ENCODE measurements at regions of chr13 and their contacts with region 1.

Region 1: DNA sequence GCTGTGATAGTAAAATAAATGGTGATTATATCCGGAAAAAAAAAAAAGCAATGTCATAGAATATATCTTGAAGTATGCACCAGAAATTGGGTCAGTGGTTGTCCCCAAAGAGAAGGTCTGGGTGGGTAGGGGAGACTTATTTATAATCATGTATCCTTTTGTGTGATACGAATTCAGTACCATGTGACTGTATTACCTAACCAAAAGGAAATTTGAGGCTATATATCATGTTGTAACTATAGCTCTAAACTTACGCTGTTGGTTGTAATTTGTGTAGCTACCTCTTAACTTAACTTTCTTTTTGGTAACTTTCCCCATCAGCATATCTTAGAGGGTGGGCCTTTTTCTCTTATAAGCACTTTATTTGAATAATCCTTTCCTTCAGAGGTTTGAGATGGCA is 25.2 kb upstream of the KCTD4 start:
- DNase-seq: no peak
- H3K4me3 Mint-ChIP-seq: no peak overlapping the region
- H3K27ac Mint-ChIP-seq: no peak overlapping the region
- H3K4me1 Mint-ChIP-seq: peaks cover 11% of the 10 kb centered on the region
- H3K27me3 Mint-ChIP-seq: no peaks in the 10 kb centered on the region
- CTCF ChIP-seq: no peak

Region 2: GRCh38 chr13:44620057-44620456 is 606.0 kb before region 1 on chr13:
- CTCF ChIA-PET with region 1: no interaction called
- intact Hi-C with region 1: no loop called
- DNase-seq: no peak
- H3K4me3 Mint-ChIP-seq: no peak overlapping the region
- H3K27ac Mint-ChIP-seq: no peak overlapping the region
- H3K4me1 Mint-ChIP-seq: no peaks in the 10 kb centered on the region
- H3K27me3 Mint-ChIP-seq: no peaks in the 10 kb centered on the region
- CTCF ChIP-seq: no peak

Region 3: DNA sequence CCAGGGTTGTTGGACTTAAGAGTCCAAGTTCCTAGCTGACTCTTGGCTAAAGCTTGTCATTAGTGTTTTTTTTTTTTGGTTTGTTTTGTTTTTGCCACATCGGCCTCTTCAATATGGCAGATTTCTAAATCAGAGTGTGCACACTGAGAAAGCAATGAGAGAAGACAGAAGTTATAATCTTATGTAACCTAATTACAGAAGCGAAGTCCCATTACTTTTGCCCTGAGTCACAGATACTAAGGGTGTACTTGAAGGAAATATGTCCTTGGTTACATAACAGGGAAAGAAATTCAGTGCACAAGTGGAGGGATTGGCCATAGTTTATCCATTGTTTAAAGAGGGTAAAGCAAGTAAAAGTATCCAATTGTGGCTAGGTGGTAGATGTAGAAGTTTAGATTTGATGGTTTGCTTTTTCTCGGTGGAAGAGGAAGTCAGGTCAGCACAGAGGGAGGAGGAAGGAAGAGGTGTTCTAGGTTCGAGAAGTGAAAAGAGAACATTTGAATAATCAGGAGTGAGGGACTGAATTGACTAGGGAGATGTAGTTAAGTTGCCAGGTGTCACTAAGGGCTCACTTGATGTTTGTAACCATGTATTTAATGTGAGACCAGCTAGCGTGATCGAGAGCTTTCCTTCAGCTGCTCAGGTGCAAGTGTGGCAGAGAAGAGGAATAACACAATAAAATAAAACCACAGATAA is 93.5 kb before region 1 on chr13:
- CTCF ChIA-PET with region 1: interaction called, 10 read pairs
- intact Hi-C with region 1: no loop called
- DNase-seq: no peak
- H3K4me3 Mint-ChIP-seq: no peak overlapping the region
- H3K27ac Mint-ChIP-seq: no peak overlapping the region
- H3K4me1 Mint-ChIP-seq: peaks cover 9% of the 10 kb centered on the region
- H3K27me3 Mint-ChIP-seq: no peaks in the 10 kb centered on the region
- CTCF ChIP-seq: no peak